ENCODE measurements at regions of chr9 and their contacts with region 1.

Region 1: DNA sequence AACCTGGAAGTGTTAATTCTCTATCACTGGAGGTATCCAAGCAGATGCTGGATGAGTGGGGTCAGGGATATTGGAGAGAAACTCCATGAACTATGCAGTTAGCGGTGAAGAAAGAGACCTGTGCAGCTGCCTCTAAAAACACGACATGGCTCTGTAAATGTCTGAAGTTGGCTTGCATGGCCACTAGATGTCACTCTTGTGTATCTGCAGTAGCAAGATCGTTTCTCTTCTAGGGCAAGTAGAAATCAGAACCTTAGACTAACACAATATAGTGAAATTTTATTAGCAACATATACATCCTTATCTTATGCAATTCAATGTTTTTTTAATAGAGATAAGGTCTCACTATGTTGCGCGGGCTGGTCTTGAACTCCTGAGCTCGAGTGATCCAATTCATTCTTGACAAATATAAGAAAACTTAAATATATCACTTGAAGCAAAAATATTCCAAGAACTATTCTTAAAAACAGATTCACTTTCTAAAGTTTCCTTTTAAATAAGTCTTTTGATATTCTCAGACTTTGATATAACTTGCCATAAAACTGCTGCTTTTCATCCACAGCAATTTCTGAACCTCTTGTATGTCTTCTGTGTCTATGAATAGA is 2.9 kb downstream of the OR2S2 start:
- DNase-seq: no peak

Region 2: GRCh38 chr9:36023260-36024048 is 68.4 kb after region 1 on chr9:
- intact Hi-C with region 1: loop called (anchors 5 to 10 kb)
- DNase-seq: no peak

Measured in posterior vena cava (tissue), 2 donors.